Activated naive CD4-positive, alpha-beta T cell treated with anti-CD3 and anti-CD28 coated beads for 36 hours (primary cell): ENCODE measurements at regions of chr1 and their contacts with region 1.

Region 1: DNA sequence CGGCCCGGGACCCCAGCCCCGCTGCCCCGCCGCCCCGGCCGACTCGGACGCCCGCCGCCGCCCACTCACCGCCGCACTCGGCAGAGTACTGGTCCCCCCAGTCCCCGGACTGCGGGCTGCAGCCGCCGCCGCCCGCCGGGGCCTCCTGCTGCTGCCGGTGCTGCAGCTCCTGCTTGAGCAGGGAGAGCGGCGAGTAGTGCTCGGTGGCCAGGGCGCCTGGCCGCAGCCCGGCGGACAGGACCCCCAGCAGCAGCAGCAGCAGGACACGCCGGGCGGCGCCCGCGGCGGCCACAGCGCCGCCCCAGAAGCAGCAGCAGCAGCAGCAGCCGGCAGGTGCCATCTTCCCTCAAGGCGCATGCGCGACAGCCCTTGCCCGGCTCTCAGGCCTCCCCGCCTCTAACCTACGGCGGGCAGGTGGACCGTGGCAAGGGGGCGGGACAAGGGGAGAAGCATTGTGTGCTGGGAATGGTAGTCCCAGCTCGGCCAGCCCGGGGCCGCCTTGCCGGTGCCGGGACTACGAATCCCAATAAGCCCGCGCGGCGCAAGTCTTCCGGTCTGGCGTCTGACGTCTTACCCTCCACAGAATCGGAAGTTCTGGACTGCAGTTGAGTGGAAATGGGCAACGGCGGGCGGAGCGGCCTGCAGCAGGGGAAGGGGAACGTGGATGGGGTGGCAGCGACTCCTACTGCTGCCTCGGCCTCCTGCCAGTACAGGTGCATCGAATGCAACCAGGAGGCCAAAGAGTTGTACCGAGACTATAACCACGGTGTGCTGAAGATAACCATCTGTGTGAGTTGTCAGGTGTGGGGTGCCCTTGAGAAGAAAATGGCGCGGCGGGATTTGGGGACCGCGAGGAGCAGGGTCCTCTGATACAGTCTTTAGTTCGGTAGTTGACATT is at the starts of genes ARV1 and TTC13:
- DNase-seq: peak; percentile 97
- H3K4me3 Mint-ChIP-seq: peak within 1 kb of the TSS; percentile 95
- H3K27ac Mint-ChIP-seq: peak within 1 kb of the TSS; percentile 92
- H3K4me1 Mint-ChIP-seq: peaks cover 30% of the 10 kb centered on the region
- H3K27me3 Mint-ChIP-seq: no peaks in the 10 kb centered on the region
- total RNA-seq, gene ARV1: 14.9 to 17.7 TPM
- total RNA-seq, gene TTC13: 10.9 to 13.2 TPM

Region 2: GRCh38 chr1:229625915-229626831 is 1352.6 kb before region 1 on chr1 and contains the starts of genes TAF5L and URB2:
- CTCF ChIA-PET with region 1: no interaction called
- intact Hi-C with region 1: loop called (anchors 10 kb)
- DNase-seq: peak; percentile 85
- H3K4me3 Mint-ChIP-seq: peak within 1 kb of the TSS; percentile 99
- H3K27ac Mint-ChIP-seq: peak within 1 kb of the TSS; percentile 89
- H3K4me1 Mint-ChIP-seq: peaks cover 51% of the 10 kb centered on the region
- H3K27me3 Mint-ChIP-seq: no peaks in the 10 kb centered on the region
- total RNA-seq, gene TAF5L: 10.3 TPM
- total RNA-seq, gene URB2: 9.5 to 10.0 TPM

Region 3: DNA sequence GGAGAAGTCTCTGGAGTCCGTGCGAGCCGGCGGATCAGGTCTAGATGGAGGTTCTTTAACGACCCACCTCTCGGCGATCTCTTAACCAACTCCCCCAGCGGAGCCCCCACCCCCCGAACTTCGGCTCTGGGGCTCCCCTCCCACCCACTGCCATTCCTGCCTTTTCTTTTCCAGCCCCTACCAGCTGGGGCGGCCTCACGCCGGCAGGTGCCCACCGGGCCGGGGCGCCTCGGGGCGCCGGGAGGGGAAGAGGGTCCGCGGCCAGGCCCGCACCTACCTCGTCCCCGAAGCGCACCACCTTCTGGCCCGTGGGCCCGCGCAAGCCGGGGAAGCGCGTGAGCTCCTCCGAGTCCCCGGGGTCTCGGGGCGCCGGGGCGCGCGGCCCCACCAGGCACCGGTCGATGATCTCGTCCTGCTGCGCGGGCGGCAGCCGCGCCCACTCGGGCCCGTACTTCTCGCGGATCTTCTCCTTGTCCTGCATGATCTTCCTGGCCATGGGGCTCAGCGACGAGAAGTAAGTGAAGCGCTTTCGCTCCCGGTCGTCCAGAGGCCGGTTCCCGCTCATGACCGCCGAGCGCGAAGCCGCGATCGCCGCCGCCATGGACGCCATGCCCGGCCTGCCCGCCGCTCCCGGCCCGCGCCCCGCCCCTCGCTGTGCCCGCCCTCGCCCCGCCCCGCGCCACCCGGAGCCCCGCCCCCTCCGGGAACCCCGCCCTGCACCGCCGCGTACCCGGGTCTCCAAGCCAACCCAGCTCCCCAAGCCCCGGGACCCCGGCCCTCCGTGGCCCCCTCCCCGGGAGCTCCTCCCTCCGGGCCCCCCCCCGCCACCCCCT is 110.6 kb before region 1 on chr1 and contains the start of gene C1orf198:
- CTCF ChIA-PET with region 1: interaction called, 3 read pairs
- intact Hi-C with region 1: loop called (anchors 2 kb)
- DNase-seq: peak; percentile 75
- H3K4me3 Mint-ChIP-seq: peak within 1 kb of the TSS; percentile 84
- H3K27ac Mint-ChIP-seq: no peak within 1 kb of the TSS
- H3K4me1 Mint-ChIP-seq: peaks cover 18% of the 10 kb centered on the region
- H3K27me3 Mint-ChIP-seq: peaks cover 16% of the 10 kb centered on the region
- total RNA-seq, gene C1orf198: 4.7 to 4.9 TPM

Region 4: DNA sequence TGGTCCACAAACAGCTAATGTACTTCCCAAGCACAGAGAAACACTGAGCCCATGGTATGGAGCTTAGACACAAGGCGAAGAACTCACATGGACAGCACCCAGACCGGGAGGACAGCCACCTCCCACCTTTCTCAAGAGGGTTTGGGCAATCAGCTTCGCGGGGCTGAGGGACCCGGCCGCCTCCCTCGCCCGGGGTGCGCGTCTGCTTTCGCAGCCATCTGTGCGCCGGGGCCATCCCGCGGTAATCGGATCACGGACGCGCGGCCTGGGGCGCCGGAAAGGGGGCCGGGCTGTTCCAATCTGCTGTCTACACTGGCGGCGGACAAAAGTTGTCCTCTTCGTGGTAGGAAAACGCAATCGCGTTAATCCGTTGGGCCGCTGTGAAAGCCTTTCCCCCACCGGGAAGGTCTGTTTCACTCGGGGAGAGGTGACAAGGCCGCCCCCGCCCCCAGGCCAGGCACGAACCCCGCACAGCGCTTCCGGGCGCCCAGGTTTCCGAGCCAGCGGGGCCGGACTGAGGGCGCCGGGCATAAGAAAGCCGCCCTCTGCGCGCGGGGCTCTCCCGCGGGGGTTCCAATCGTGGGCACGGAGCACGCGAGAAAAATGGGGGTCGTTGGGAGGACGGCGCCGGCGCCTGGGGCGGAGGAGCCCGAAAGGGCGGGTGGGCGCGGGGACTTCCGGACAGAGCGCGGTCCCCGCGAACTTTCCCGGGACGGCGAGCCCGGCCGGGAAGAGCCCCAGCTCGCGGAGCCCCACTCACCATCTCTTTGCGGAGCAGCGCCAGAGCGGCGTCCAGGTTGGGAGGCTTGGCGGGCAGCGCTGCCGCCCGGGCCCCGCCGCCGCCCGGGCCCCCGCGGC is 60.6 kb after region 1 on chr1:
- CTCF ChIA-PET with region 1: interaction called, 7 read pairs
- intact Hi-C with region 1: loop called (anchors 1 kb)
- DNase-seq: peak; percentile 56
- H3K4me3 Mint-ChIP-seq: peak overlapping the region; percentile 75
- H3K27ac Mint-ChIP-seq: no peak overlapping the region
- H3K4me1 Mint-ChIP-seq: peaks cover 24% of the 10 kb centered on the region
- H3K27me3 Mint-ChIP-seq: peaks cover 2% of the 10 kb centered on the region

Region 5: GRCh38 chr1:231272880-231273279 is 294.1 kb after region 1 on chr1:
- CTCF ChIA-PET with region 1: no interaction called
- intact Hi-C with region 1: loop called (anchors 2 kb)
- DNase-seq: peak; percentile 18
- H3K4me3 Mint-ChIP-seq: no peak overlapping the region
- H3K27ac Mint-ChIP-seq: peak overlapping the region; percentile 98
- H3K4me1 Mint-ChIP-seq: peaks cover 22% of the 10 kb centered on the region
- H3K27me3 Mint-ChIP-seq: no peaks in the 10 kb centered on the region

Region 6: DNA sequence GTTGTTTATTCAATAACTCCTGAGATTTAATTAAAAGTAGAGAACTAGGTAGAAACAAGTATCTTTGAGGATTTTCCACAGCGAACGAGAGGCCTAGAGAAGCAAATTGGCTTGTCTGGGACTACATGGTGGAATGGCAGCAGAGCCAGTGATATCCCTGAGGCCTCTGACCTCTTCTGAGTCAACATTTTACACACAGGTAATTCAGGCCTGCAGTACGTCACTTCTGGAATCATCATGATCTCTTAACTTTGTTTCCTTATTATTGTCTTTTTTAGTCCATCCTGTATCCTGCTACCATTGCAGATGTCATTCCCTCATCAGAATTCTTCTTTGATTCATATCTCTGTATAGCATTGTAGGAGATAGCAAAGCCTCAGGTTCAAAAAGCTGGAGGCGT is 369.2 kb after region 1 on chr1:
- CTCF ChIA-PET with region 1: no interaction called
- intact Hi-C with region 1: no loop called
- DNase-seq: no peak
- H3K4me3 Mint-ChIP-seq: no peak overlapping the region
- H3K27ac Mint-ChIP-seq: no peak overlapping the region
- H3K4me1 Mint-ChIP-seq: no peaks in the 10 kb centered on the region
- H3K27me3 Mint-ChIP-seq: no peaks in the 10 kb centered on the region

Region 7: GRCh38 chr1:231528172-231529029 is 549.7 kb after region 1 on chr1 and contains the start of gene TSNAX:
- CTCF ChIA-PET with region 1: no interaction called
- intact Hi-C with region 1: loop called (anchors 10 kb)
- DNase-seq: peak; percentile 86
- H3K4me3 Mint-ChIP-seq: peak within 1 kb of the TSS; percentile 96
- H3K27ac Mint-ChIP-seq: peak within 1 kb of the TSS; percentile 97
- H3K4me1 Mint-ChIP-seq: peaks cover 47% of the 10 kb centered on the region
- H3K27me3 Mint-ChIP-seq: no peaks in the 10 kb centered on the region
- total RNA-seq, gene TSNAX: 25.7 to 28.2 TPM

Region 8: DNA sequence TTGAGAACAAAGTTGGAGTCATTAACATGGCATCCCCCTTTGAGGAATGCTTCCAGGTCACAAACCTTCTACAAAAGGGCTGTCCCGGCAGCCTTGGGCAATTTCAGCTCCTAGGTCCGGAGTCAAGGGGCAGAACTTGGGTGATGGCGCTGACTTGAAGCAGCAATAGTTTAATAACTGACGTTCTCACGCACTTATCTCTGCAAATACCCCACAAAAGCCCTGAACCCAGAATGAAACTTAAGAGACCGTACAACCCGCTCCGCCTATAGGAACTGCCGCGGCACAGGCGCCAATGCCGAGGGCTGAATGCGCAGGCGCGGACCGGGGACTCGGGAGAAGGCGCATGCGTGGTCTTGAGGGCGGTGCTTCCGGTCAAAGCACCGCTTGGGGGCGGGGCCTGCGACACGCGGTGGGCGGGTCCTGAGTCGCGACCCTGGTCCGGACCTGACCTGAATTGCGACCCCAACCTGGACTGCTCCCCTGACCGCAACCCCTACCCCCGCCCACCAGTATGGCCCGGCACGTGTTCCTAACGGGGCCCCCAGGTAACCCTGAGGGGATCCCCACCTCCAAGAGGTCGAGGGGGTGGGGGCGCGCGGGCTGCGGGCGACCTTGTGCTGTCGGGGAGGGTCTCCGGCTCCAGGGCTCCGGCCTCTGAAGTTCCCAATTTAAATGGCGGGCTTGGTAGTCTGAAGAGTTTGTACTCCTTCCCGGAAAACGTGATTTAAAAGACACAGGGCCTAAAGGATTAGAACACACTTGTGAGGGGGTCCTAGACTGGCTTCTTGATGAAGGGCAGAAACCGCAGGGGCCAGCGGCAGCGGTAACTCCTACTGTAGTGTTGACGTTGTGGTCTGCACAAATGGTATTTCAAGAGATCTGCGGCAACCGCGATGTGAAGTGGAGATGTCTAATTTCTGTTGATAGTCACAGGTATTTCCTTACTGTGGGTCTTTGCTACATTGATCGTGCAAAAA is 1971.7 kb after region 1 on chr1 and contains the start of gene NTPCR:
- CTCF ChIA-PET with region 1: no interaction called
- intact Hi-C with region 1: loop called (anchors 5 kb)
- DNase-seq: peak; percentile 96
- H3K4me3 Mint-ChIP-seq: peak within 1 kb of the TSS; percentile 92
- H3K27ac Mint-ChIP-seq: peak within 1 kb of the TSS; percentile 92
- H3K4me1 Mint-ChIP-seq: peaks cover 31% of the 10 kb centered on the region
- H3K27me3 Mint-ChIP-seq: no peaks in the 10 kb centered on the region
- total RNA-seq, gene NTPCR: 53.1 TPM